Calu3 (cell line): ENCODE measurements at regions of chr17 and their contacts with region 1.

Region 1: GRCh38 chr17:42527273-42527703 is 8.8 kb upstream of the NAGLU start:
- DNase-seq: peak; percentile 88
- H3K4me3 Mint-ChIP-seq: no peak overlapping the region
- H3K27ac Mint-ChIP-seq: peak overlapping the region; percentile 12
- H3K4me1 Mint-ChIP-seq: peaks cover 39% of the 10 kb centered on the region
- H3K27me3 Mint-ChIP-seq: no peaks in the 10 kb centered on the region
- CTCF ChIP-seq: peak; percentile 96

Region 2: GRCh38 chr17:42422958-42423712 is 104.2 kb before region 1 on chr17 and contains the start of gene CAVIN1:
- CTCF ChIA-PET with region 1: interaction called, 17 read pairs
- intact Hi-C with region 1: no loop called
- DNase-seq: peak; percentile 88
- H3K4me3 Mint-ChIP-seq: peak within 1 kb of the TSS; percentile 89
- H3K27ac Mint-ChIP-seq: peak within 1 kb of the TSS; percentile 18
- H3K4me1 Mint-ChIP-seq: peaks cover 38% of the 10 kb centered on the region
- H3K27me3 Mint-ChIP-seq: peaks cover 44% of the 10 kb centered on the region
- CTCF ChIP-seq: no peak
- total RNA-seq, gene CAVIN1: 4.0 and 6.7 TPM in 2 replicates

Region 3: GRCh38 chr17:42566883-42567573 is 39.7 kb after region 1 on chr17 and contains the start of gene MLX:
- CTCF ChIA-PET with region 1: no interaction called
- intact Hi-C with region 1: no loop called
- DNase-seq: peak; percentile 98
- H3K4me3 Mint-ChIP-seq: peak within 1 kb of the TSS; percentile 85
- H3K27ac Mint-ChIP-seq: peak within 1 kb of the TSS; percentile 47
- H3K4me1 Mint-ChIP-seq: peaks cover 34% of the 10 kb centered on the region
- H3K27me3 Mint-ChIP-seq: no peaks in the 10 kb centered on the region
- CTCF ChIP-seq: no peak
- total RNA-seq, gene MLX: 65.0 and 69.8 TPM in 2 replicates